ENCODE measurements at regions of chr18 and their contacts with region 1.

Region 1: GRCh38 chr18:25351777-25352628 is at the start of gene ZNF521:
- DNase-seq: peak; percentile 93
- H3K4me3 ChIP-seq: peak within 1 kb of the TSS; percentile 90 to 100 (median 99)
- H3K27ac ChIP-seq: peak within 1 kb of the TSS; percentile 98
- H3K4me1 ChIP-seq: peaks cover 33% of the 10 kb centered on the region
- H3K27me3 ChIP-seq: no peaks in the 10 kb centered on the region
- CTCF ChIP-seq: peak; percentile 23 to 31
- POLR2A ChIP-seq: peak; percentile 88
- total RNA-seq, gene ZNF521: 166 and 168 TPM in 2 replicates

Region 2: DNA sequence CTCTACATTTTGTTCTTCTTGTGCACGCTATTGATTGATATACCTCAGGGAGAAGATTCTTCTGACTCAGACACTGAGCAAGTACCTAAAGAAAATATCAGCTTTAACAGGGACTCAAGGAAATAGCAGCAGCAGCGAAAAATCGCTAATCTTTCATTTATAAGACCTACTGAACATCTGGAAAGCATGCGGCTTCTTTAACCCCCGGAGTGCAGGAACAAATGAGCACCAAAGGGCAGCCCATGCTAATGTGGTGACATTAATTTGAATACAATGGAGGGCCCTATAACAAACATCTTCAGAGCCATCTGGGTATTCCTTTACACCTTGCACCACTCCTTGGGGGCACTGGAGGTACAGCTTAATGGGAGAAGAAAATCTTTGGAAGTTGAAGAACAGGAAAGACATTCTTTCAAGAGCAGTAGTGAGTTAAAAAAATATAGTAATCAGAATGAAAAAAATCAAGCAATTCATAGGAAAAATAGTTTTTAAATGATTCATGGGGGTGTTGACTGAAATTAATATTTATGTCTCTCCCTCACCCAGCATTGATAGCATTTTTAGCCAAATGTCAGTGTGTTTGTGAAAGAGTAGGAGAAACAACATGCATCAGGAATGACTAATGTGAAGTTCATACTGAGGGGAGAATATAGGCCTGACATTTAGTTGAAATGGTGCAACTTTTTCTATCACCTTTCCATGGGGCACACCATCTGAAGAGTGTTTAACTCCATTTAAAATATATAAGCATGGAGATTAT is 609.9 kb before region 1 on chr18:
- CTCF ChIA-PET with region 1: no interaction called
- POLR2A ChIA-PET with region 1: no interaction called
- dilution Hi-C with region 1: no loop called
- intact Hi-C with region 1: loop called (anchors 5 kb)
- DNase-seq: no peak
- H3K4me3 ChIP-seq: no peak overlapping the region
- H3K27ac ChIP-seq: no peak overlapping the region
- H3K4me1 ChIP-seq: no peaks in the 10 kb centered on the region
- H3K27me3 ChIP-seq: peaks cover 7 to 8% of the 10 kb centered on the region in 2 experiments
- CTCF ChIP-seq: no peak
- POLR2A ChIP-seq: no peak

Region 3: GRCh38 chr18:25099895-25100294 is 252.1 kb before region 1 on chr18:
- CTCF ChIA-PET with region 1: no interaction called
- POLR2A ChIA-PET with region 1: no interaction called
- dilution Hi-C with region 1: no loop called
- intact Hi-C with region 1: loop called (anchors 2 kb)
- DNase-seq: peak; percentile 63
- H3K4me3 ChIP-seq: no peak overlapping the region
- H3K27ac ChIP-seq: peak overlapping the region; percentile 20
- H3K4me1 ChIP-seq: peaks cover 58% of the 10 kb centered on the region
- H3K27me3 ChIP-seq: no peaks in the 10 kb centered on the region
- CTCF ChIP-seq: no peak
- POLR2A ChIP-seq: no peak

Region 4: DNA sequence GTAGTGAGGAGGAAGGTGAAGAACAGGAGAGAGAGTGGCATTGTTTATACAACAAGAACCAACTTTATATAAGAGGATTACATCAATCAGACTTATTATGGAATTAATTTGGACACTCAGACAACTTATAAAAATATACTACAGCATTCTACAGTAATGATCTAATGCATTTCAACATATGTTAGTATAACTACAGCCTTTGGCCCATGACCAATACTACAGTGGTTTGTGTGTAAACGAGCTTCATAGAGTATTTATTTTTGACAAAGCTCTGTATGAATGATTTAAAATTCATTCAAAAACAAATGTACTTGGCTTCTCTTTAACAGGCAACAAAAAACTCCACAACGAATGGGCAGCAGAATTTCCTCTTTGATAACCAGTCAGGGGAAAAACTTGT is 72.9 kb before region 1 on chr18:
- CTCF ChIA-PET with region 1: interaction called, 4 read pairs
- POLR2A ChIA-PET with region 1: no interaction called
- dilution Hi-C with region 1: no loop called
- intact Hi-C with region 1: loop called (anchors 5 kb)
- DNase-seq: peak; percentile 51
- H3K4me3 ChIP-seq: peak overlapping the region in 1 of 3 experiments; percentile 60
- H3K27ac ChIP-seq: peak overlapping the region; percentile 51
- H3K4me1 ChIP-seq: peaks cover 93% of the 10 kb centered on the region
- H3K27me3 ChIP-seq: no peaks in the 10 kb centered on the region
- CTCF ChIP-seq: no peak
- POLR2A ChIP-seq: no peak

Region 5: DNA sequence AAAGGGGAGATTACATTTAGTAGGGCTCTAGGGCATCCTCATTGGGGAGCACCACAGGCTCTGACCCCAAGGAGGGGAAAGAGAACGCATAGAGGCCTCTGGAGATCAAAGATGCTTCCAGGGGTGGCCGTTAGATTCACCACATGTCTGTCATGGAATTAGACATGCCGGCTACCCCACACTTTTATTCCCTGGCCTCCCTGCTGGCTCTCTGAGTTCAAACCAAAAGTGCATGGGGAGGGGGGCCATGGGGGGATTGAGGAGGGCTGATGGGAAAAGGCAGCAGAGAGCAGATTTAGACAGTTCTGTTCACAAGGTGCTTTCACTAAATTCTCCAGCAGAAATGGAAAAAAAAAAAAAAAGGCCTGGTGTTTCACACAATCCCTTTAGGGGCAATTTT is 64.4 kb after region 1 on chr18:
- CTCF ChIA-PET with region 1: no interaction called
- POLR2A ChIA-PET with region 1: no interaction called
- dilution Hi-C with region 1: no loop called
- intact Hi-C with region 1: no loop called
- DNase-seq: no peak
- H3K4me3 ChIP-seq: no peak overlapping the region
- H3K27ac ChIP-seq: no peak overlapping the region
- H3K4me1 ChIP-seq: no peaks in the 10 kb centered on the region
- H3K27me3 ChIP-seq: peaks cover 0 to 15% of the 10 kb centered on the region in 2 experiments
- CTCF ChIP-seq: no peak
- POLR2A ChIP-seq: no peak

Region 6: DNA sequence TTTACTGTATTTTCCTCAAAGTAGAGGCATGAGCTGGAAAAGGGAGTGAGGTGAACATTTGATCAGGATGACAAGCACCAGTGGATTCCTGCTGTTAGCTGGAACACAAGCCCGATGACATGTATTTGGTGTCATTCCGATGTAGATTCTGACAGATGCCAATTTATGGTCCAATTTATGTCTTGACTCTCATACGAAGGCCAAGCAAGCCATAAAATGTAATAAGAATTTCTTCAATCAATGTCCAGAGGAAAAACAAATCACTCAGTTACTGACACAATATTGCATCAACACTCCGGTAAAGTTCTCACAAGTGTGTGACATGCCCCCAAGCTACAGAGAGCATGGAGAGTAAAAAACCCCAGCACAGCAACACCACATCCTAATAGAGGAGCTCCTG is 138.3 kb after region 1 on chr18:
- CTCF ChIA-PET with region 1: no interaction called
- POLR2A ChIA-PET with region 1: no interaction called
- dilution Hi-C with region 1: no loop called
- intact Hi-C with region 1: no loop called
- DNase-seq: no peak
- H3K4me3 ChIP-seq: no peak overlapping the region
- H3K27ac ChIP-seq: no peak overlapping the region
- H3K4me1 ChIP-seq: no peaks in the 10 kb centered on the region
- H3K27me3 ChIP-seq: peaks cover 0 to 2% of the 10 kb centered on the region in 2 experiments
- CTCF ChIP-seq: no peak
- POLR2A ChIP-seq: no peak

Region 7: DNA sequence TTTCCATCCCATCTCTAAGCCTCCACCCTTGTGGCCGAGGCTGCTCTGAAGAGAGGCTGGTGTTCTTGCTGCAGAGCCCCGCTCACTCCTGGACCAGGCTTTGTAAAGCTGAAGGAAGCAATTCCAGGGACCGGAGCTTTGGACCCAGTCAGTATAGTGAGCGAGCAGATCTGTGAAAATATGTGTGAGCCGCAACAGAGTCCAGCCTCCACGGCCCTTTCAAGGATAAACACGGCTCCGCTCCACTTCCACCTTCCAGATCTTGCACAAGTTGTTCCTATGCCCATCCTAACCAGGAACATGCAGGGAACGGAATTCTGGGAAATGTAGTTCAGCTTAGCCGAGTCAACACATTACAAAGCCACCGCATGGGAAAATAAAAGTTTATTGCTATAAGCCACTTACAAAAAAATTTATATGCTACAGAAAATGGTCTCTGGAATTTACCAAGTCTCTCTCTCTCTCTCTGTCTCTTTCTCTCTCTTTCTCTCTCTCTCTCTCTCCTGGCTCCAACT is 151.6 kb after region 1 on chr18:
- CTCF ChIA-PET with region 1: no interaction called
- POLR2A ChIA-PET with region 1: no interaction called
- dilution Hi-C with region 1: no loop called
- intact Hi-C with region 1: loop called (anchors 1 kb)
- DNase-seq: peak; percentile 85
- H3K4me3 ChIP-seq: peak overlapping the region; percentile 27 to 77 (median 65)
- H3K27ac ChIP-seq: no peak overlapping the region
- H3K4me1 ChIP-seq: peaks cover 10% of the 10 kb centered on the region
- H3K27me3 ChIP-seq: no peaks in the 10 kb centered on the region
- CTCF ChIP-seq: no peak
- POLR2A ChIP-seq: no peak

Region 8: GRCh38 chr18:25832001-25832604 is 480.1 kb after region 1 on chr18:
- CTCF ChIA-PET with region 1: interaction called, 17 read pairs
- POLR2A ChIA-PET with region 1: no interaction called
- dilution Hi-C with region 1: no loop called
- intact Hi-C with region 1: loop called (anchors 2 kb)
- DNase-seq: peak; percentile 73
- H3K4me3 ChIP-seq: no peak overlapping the region
- H3K27ac ChIP-seq: no peak overlapping the region
- H3K4me1 ChIP-seq: peaks cover 4% of the 10 kb centered on the region
- H3K27me3 ChIP-seq: peaks cover 0 to 5% of the 10 kb centered on the region in 2 experiments
- CTCF ChIP-seq: peak; percentile 83 to 96
- POLR2A ChIP-seq: no peak

Measured in endothelial cell of umbilical vein (primary cell).